ENCODE measurements at regions of chr4 and their contacts with region 1.

Region 1: DNA sequence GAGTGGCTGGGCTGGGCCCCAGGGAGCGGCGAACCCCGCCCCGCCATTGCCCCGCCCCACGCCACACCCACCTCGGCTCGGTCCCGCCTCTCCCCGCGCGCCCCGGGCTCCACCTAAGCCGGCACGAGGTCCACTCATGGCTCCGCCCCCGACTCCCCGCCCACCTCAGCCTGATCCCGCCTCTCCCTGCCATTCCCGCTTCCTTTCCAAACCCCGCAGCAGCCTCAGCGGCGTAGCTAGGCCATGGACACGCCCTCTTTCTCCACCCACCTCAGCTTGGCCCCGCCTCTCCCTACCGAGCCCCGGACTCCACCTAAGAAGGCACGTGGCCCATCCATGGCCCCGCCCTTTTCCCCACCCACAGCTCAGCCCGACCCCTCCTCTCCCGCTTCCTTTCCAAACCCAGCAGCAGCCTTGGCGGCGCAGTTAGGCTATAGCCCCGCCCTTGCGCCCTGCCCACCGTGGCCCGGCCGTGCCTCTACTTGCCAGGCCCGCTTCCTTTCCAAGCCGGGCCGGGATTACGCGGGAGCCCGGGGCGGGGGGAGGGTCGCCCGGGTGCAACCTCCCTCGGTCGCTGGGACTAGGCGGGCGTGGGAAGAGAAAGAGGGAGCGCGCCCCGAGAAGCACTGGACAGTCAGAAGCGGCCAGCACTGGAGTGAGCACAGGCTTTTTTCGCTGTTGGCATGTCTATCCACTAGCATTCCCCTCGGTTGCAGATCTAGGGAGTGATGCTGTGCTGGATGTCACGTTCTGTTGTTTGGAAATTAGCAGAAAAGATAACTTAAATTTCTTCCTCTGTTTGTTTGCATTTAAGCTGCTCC is at the start of gene RELL1:
- DNase-seq: peak; percentile 100
- H3K4me3 Mint-ChIP-seq: peak within 1 kb of the TSS; percentile 84
- H3K27ac Mint-ChIP-seq: peak within 1 kb of the TSS; percentile 82
- H3K4me1 Mint-ChIP-seq: peaks cover 34% of the 10 kb centered on the region
- H3K27me3 Mint-ChIP-seq: no peaks in the 10 kb centered on the region
- total RNA-seq, gene RELL1: 8.7 to 10.3 TPM

Region 2: DNA sequence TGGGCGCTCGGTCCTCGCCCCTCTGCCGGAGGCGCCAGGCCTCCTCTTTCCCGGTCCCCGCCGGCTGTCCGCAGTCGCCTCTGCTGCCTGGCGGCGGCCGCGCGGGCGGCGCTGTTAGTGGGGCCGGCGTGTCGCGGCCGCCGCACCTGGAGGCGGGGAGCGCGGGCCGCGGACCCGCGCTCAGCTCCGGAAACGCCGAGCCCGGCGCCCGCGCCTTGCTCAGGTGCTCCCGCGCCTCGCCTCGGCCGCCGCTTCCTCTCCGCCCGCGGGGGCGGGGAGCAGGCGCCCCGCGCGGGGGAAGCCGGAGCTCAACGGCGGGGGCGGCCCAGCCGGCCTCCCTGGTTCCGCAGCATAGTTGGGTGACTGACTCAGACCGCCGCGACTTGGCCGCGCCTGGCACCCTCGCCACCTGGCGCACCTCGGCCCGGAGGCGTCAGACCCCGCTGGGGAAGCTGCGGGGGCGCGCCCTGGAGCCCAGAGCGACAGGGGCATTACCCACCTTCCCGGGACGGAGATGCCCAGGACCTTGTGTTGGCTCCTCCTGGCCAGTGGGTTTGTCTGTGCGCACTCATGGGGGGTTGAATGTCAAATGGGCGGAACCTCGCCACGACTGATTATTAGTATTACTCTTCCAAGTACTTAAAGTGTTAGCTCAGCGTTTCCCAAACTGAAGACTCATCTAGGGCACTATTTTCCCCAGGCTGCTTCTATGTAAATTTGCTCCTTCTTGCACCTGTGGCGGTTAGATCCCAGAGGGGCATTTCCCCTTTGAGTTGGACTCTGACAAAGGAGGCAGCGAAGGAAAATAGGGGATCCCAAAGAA is 1442.1 kb before region 1 on chr4 and contains the start of gene ARAP2:
- CTCF ChIA-PET with region 1: no interaction called
- intact Hi-C with region 1: loop called (anchors 1 kb)
- DNase-seq: peak; percentile 77
- H3K4me3 Mint-ChIP-seq: peak within 1 kb of the TSS; percentile 94
- H3K27ac Mint-ChIP-seq: peak within 1 kb of the TSS; percentile 88
- H3K4me1 Mint-ChIP-seq: peaks cover 24% of the 10 kb centered on the region
- H3K27me3 Mint-ChIP-seq: no peaks in the 10 kb centered on the region
- total RNA-seq, gene ARAP2: 29.6 to 38.2 TPM

Region 3: GRCh38 chr4:37603070-37603468 is 83.5 kb before region 1 on chr4:
- CTCF ChIA-PET with region 1: interaction called, 6 read pairs
- intact Hi-C with region 1: loop called (anchors 1 kb)
- DNase-seq: peak; percentile 87
- H3K4me3 Mint-ChIP-seq: no peak overlapping the region
- H3K27ac Mint-ChIP-seq: no peak overlapping the region
- H3K4me1 Mint-ChIP-seq: peaks cover 3% of the 10 kb centered on the region
- H3K27me3 Mint-ChIP-seq: no peaks in the 10 kb centered on the region

Region 4: DNA sequence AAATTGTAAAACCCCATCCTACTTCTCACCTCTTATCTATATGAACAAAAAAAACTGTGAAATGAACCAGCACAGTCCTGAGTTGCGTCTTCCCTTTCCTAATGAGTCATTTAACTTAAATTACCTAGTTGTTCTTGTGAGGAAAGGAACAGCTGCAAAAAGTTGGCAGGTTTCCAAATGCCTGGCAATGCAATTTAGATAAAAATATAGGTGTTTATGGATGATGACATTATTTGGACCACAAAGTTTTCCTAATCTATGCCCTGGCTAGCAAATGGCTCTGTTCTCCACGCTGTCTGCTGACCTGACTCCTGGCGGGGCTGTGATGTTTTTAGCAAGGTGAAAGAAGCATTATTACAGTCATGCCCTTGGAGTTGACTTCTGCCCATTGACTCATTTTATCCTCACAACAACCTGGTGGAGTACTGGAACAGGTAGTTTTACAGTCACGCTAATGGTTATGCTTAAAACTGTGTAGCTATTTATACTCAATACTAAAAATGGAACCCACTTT is 29.4 kb after region 1 on chr4:
- CTCF ChIA-PET with region 1: no interaction called
- intact Hi-C with region 1: loop called (anchors 1 kb)
- DNase-seq: peak; percentile 80
- H3K4me3 Mint-ChIP-seq: no peak overlapping the region
- H3K27ac Mint-ChIP-seq: peak overlapping the region; percentile 77
- H3K4me1 Mint-ChIP-seq: peaks cover 17% of the 10 kb centered on the region
- H3K27me3 Mint-ChIP-seq: peaks cover 4% of the 10 kb centered on the region

Region 5: DNA sequence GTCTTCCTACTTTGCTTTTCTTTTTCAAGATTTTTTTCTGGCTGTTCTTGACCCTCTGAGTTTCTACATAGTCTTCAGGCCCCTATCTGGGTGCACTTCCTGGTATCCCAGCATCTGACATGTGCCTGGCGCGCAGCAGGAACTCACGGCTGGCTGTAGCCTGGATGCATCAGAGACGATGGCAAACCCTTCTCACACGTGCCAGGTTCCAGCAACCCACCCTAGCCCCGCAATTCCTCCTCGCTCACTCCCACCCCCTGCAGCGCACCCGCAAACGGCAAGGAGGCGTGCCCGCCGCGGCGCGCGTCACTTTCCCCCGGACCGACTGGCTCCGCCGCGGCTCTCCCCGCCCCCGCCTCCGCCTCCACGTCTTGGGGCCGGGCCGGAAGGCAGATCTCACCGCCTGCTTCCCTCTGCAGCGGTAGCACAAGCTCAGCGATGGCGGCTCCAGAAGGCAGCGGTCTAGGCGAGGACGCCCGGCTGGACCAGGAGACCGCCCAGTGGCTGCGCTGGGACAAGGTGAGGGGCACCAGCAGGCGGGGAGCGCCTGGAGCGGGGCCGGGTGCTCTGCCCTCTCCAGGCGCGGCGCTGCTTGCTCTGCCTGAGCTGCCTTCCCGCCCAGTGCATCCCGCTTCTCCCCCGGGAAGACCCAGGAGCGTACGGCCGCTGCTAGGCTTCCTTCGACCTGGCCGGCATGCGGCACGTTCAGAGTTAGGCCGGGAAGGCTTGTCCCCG is 139.9 kb after region 1 on chr4 and contains the start of gene PGM2:
- CTCF ChIA-PET with region 1: no interaction called
- intact Hi-C with region 1: loop called (anchors 1 kb)
- DNase-seq: peak; percentile 92
- H3K4me3 Mint-ChIP-seq: peak within 1 kb of the TSS; percentile 100
- H3K27ac Mint-ChIP-seq: peak within 1 kb of the TSS; percentile 91
- H3K4me1 Mint-ChIP-seq: peaks cover 33% of the 10 kb centered on the region
- H3K27me3 Mint-ChIP-seq: no peaks in the 10 kb centered on the region
- total RNA-seq, gene PGM2: 53.7 to 53.9 TPM

Region 6: DNA sequence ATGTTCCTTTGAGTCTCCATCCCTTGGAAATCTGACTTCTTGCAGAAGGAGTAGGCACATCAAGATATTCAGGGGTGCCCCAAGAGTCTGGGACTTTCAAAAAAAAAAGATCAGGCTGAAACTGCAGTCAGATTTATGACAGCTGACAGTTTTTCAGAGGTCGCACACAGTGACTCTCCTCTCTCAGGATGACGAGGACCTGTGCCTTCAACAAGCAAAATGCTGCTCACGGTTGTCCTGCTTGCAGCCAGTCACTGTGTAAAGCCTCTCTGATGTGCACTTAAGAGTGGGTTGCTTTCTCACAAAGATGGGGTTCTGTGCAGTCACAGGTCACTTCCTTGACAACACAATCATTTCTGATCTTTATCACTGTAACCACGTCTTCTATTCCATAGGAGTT is 451.8 kb after region 1 on chr4:
- CTCF ChIA-PET with region 1: no interaction called
- intact Hi-C with region 1: no loop called
- DNase-seq: no peak
- H3K4me3 Mint-ChIP-seq: no peak overlapping the region
- H3K27ac Mint-ChIP-seq: no peak overlapping the region
- H3K4me1 Mint-ChIP-seq: peaks cover 10% of the 10 kb centered on the region
- H3K27me3 Mint-ChIP-seq: no peaks in the 10 kb centered on the region

Region 7: DNA sequence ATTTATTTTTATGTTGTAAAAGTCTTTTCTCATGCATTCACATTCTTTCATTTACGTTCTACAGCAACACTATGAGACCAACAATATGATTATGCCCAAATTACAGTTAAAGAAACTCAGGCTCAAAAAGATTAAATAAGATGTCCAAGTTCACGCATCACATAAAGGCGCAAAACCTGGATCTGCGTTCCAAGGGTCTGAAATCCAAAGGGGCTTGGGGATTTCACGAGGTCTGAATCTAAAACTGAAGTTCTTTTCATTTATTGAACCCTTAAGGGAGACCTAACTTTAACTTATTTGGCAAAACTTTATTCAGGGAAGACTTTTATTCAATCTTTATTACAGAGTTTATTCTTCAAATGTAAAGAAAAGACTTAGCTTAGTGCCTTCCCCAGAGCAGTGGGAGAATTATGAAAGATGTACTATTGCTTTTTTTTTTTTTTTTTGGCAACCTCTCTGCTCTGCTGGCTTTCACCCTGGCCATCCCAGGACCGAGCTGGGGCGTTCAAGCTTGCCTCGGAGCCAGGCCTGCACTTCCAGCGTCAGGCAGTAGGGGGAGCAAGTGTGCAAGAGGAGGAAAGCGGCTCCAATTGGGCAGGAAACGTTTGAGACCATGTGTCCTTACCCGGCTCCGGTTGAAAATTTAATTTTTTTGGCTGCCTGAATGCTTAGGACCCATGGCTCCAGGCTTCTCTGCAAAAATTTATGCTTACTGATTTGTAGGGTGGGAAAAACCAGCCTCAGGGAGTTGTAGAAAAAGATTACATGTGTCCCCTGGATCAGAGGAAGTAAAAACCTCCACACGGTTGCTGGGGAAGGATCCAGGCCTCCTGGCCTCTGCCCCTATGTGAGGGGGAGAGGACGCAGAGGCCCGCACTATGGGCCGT is 633.1 kb after region 1 on chr4:
- CTCF ChIA-PET with region 1: no interaction called
- intact Hi-C with region 1: loop called (anchors 10 kb)
- DNase-seq: peak; percentile 98
- H3K4me3 Mint-ChIP-seq: peak overlapping the region; percentile 76
- H3K27ac Mint-ChIP-seq: peak overlapping the region; percentile 89
- H3K4me1 Mint-ChIP-seq: peaks cover 46% of the 10 kb centered on the region
- H3K27me3 Mint-ChIP-seq: no peaks in the 10 kb centered on the region

Region 8: DNA sequence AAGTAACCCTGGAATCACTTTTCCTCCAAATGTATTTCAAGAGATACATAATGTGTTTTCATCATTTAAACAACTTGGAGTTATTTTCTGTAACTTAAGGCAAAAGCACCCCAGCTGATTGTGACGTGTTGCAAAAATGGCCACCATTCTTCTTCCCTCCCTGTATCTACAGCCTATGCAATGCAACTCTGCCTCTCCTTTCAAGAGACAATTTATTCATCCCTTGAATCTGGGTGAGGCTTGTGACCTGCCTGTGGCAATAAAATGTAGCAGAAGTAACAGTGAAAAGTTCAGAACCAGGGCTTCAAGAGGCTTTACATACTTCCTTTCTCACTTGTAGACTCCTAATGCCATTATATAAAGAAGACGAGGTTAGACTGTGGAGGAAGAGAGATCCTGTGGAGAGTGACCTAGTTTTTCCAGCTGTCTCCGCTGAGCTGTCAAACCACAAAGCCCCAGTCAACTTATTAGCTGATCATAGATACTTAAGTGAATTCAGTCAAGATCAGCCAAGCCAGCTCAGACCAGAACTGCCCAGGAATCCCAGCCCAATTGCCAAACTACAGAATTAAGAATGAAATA is 896.4 kb after region 1 on chr4:
- CTCF ChIA-PET with region 1: no interaction called
- intact Hi-C with region 1: no loop called
- DNase-seq: peak; percentile 36
- H3K4me3 Mint-ChIP-seq: no peak overlapping the region
- H3K27ac Mint-ChIP-seq: no peak overlapping the region
- H3K4me1 Mint-ChIP-seq: peaks cover 11% of the 10 kb centered on the region
- H3K27me3 Mint-ChIP-seq: no peaks in the 10 kb centered on the region